ENCODE measurements at regions of chr1 and their contacts with region 1.

Region 1: GRCh38 chr1:29583727-29584126 is 347.4 kb downstream of the PTPRU start:
- DNase-seq: peak in 1 of 2 donors; percentile 77
- H3K4me3 ChIP-seq: no peak overlapping the region
- H3K27ac ChIP-seq: no peak overlapping the region
- H3K4me1 ChIP-seq: no peaks in the 10 kb centered on the region
- H3K27me3 ChIP-seq: no peaks in the 10 kb centered on the region
- CTCF ChIP-seq: no peak
- POLR2A ChIP-seq: no peak

Region 2: GRCh38 chr1:28736450-28737306 is 847.0 kb before region 1 on chr1 and contains the start of gene YTHDF2:
- intact Hi-C with region 1: no loop called
- DNase-seq: peak in 1 of 2 donors; percentile 92
- H3K4me3 ChIP-seq: peak within 1 kb of the TSS; percentile 85 to 88
- H3K27ac ChIP-seq: peak within 1 kb of the TSS; percentile 85
- H3K4me1 ChIP-seq: peaks cover 47% of the 10 kb centered on the region
- H3K27me3 ChIP-seq: no peaks in the 10 kb centered on the region
- CTCF ChIP-seq: peak; percentile 75 to 96 (median 85)
- POLR2A ChIP-seq: peak in 1 of 2 donors; percentile 68
- total RNA-seq, gene YTHDF2: 61.9 TPM

Region 3: DNA sequence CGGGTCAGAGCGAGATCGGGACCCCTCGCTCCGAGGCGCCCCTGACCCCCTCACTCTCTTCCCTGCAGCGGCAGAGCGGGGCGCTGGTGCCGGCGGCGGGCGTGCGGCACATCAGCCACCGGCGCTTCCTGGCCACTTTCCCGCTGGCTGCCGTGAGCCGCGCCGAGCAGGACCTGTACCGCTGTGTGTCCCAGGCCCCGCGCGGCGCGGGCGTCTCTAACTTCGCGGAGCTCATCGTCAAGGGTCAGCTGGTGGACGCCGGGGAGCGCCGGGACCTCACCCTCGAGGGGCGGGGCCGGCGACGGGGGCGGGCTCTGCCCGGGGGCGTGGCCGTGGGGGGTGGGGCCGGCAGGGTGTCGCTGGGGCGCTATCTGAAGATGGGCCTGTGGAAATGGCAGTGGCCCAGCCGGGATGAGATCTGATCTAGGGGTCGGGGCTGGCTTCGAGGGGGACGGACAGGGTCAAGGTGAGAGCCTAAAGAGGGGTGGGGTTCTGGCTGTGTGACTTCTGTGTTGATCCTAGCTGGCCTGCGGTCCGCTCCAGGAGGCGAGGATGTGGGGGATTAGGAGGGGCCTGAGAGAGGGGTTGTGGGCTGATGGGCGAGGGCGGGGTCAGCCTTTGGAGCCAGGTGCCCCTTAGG is 323.8 kb before region 1 on chr1:
- intact Hi-C with region 1: no loop called
- DNase-seq: no peak
- H3K4me3 ChIP-seq: peak overlapping the region; percentile 42 to 50
- H3K27ac ChIP-seq: peak overlapping the region; percentile 23
- H3K4me1 ChIP-seq: peaks cover 22% of the 10 kb centered on the region
- H3K27me3 ChIP-seq: no peaks in the 10 kb centered on the region
- CTCF ChIP-seq: no peak
- POLR2A ChIP-seq: no peak

Region 4: DNA sequence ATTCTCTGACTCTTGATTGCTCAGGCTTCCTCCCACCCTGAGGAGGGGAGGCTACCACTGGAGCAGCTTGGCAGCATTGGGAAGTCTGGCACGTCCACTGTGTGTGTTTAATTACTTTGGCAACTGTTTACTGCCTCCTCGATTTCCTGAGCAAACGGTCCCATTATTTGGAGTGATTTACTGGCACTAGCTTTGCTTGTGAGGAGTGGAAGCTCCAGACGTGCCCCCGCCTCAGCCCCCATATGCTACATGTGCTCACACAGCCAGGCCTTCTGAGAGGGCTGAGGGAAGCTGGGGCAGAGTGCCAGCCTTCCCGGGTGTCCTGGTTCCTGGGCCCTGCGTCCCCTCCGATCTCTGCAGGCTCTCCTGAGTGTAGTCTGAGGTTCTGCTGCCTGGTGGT is 41.2 kb before region 1 on chr1:
- intact Hi-C with region 1: no loop called
- DNase-seq: no peak
- H3K4me3 ChIP-seq: no peak overlapping the region
- H3K27ac ChIP-seq: no peak overlapping the region
- H3K4me1 ChIP-seq: no peaks in the 10 kb centered on the region
- H3K27me3 ChIP-seq: no peaks in the 10 kb centered on the region
- CTCF ChIP-seq: no peak
- POLR2A ChIP-seq: no peak

Region 5: GRCh38 chr1:29559056-29559455 is 24.7 kb before region 1 on chr1:
- intact Hi-C with region 1: no loop called
- DNase-seq: no peak
- H3K4me3 ChIP-seq: no peak overlapping the region
- H3K27ac ChIP-seq: no peak overlapping the region
- H3K4me1 ChIP-seq: no peaks in the 10 kb centered on the region
- H3K27me3 ChIP-seq: no peaks in the 10 kb centered on the region
- CTCF ChIP-seq: no peak
- POLR2A ChIP-seq: no peak

Region 6: GRCh38 chr1:29569971-29570634 is 13.6 kb before region 1 on chr1:
- intact Hi-C with region 1: loop called (anchors 2 kb)
- DNase-seq: no peak
- H3K4me3 ChIP-seq: no peak overlapping the region
- H3K27ac ChIP-seq: no peak overlapping the region
- H3K4me1 ChIP-seq: no peaks in the 10 kb centered on the region
- H3K27me3 ChIP-seq: no peaks in the 10 kb centered on the region
- CTCF ChIP-seq: no peak
- POLR2A ChIP-seq: no peak